ENCODE measurements at regions of chrX and their contacts with region 1.

Region 1: DNA sequence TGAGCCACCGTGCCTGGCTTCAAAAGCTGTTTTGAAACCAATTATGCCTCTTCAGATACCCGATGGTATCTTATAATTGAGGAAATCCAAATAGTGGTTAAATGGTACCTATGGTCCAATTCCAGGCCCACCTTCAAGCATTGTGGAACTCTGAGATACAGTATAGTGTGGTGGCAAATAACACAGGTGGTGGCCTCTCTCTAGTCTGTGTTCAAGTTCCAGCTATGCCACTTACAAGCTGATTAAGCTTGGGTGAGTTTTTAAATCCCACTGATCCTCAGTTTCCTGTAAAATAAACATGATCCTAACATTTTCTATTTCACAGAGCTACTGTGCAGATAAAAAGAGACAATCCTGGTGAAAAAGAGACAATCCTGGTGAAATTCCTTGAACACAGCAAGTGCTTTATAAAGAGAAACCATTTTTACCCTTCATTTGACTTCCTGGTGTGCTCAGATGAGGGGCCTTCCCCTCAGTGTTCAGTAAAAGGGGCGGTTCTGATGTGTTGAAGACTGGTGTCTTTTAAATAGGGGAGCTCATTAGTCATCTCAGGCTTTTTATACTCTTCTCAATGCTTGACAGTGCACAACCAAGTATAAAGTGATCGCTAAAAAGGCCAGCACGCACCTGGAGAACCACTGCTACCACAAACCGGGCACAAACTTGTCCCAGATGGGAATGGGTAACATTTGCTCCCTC is 30.8 kb upstream of the CD40LG start:
- DNase-seq: no peak
- H3K4me3 ChIP-seq: no peak overlapping the region
- H3K27ac ChIP-seq: no peak overlapping the region
- H3K4me1 ChIP-seq: no peaks in the 10 kb centered on the region
- H3K27me3 ChIP-seq: no peaks in the 10 kb centered on the region
- CTCF ChIP-seq: no peak

Region 2: GRCh38 chrX:136689436-136689835 is 72.3 kb after region 1 on chrX:
- CTCF ChIA-PET with region 1: no interaction called
- dilution Hi-C with region 1: loop called (anchors 5 kb)
- in situ Hi-C with region 1: no loop called
- intact Hi-C with region 1: no loop called
- DNase-seq: peak; percentile 26
- H3K4me3 ChIP-seq: no peak overlapping the region
- H3K27ac ChIP-seq: no peak overlapping the region
- H3K4me1 ChIP-seq: peaks cover 5% of the 10 kb centered on the region
- H3K27me3 ChIP-seq: no peaks in the 10 kb centered on the region
- CTCF ChIP-seq: no peak

Measured in mammary epithelial cell (primary cell).